Heart right ventricle (tissue), 16 donors: ENCODE measurements at regions of chr6 and their contacts with region 1.

Region 1: GRCh38 chr6:163413345-163414116 is 987 bp upstream of the QKI start:
- DNase-seq: peak; percentile 90 to 91
- ATAC-seq: peak; percentile 87 to 96 (median 90)
- H3K4me3 ChIP-seq: peak overlapping the region; percentile 48 to 85 (median 74)
- H3K27ac ChIP-seq: peak overlapping the region; percentile 95 to 100 (median 100)
- H3K4me1 ChIP-seq: peaks cover 0 to 28% (median 13%) of the 10 kb centered on the region in 9 donors
- H3K27me3 ChIP-seq: no peaks in the 10 kb centered on the region
- CTCF ChIP-seq: peak in 2 of 9 donors; percentile 6 to 8

Region 2: DNA sequence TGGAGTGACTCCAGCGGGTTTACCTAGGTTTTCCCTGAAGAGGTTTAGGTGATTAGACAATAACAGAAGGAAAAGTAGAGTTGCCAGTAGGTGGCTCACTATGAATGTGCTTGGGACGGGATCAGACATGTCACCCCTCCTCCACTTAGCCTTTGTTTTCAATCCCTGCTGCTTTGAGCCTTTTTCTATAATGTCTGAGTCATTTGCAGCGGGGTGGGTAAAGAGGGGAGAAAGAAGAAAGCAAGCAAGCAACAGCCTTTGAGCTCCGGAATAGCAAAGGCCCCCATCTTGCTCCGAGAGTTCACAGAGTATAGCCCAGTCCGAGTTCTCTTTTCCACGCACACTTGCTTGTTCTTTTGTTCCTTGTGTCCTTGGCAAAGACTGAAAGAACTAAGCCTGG is 556.6 kb before region 1 on chr6:
- intact Hi-C with region 1: loop called in 4 of 10 experiments (anchors 10 kb)
- DNase-seq: peak in 1 of 2 donors; percentile 55
- ATAC-seq: peak; percentile 76 to 92 (median 89)
- H3K4me3 ChIP-seq: peak overlapping the region in 8 of 10 donors; percentile 1 to 43 (median 36)
- H3K27ac ChIP-seq: peak overlapping the region in 9 of 10 donors; percentile 6 to 74 (median 54)
- H3K4me1 ChIP-seq: peaks cover 0 to 10% (median 0%) of the 10 kb centered on the region in 9 donors
- H3K27me3 ChIP-seq: no peaks in the 10 kb centered on the region
- CTCF ChIP-seq: peak in 8 of 9 donors; percentile 17 to 75 (median 58)

Region 3: DNA sequence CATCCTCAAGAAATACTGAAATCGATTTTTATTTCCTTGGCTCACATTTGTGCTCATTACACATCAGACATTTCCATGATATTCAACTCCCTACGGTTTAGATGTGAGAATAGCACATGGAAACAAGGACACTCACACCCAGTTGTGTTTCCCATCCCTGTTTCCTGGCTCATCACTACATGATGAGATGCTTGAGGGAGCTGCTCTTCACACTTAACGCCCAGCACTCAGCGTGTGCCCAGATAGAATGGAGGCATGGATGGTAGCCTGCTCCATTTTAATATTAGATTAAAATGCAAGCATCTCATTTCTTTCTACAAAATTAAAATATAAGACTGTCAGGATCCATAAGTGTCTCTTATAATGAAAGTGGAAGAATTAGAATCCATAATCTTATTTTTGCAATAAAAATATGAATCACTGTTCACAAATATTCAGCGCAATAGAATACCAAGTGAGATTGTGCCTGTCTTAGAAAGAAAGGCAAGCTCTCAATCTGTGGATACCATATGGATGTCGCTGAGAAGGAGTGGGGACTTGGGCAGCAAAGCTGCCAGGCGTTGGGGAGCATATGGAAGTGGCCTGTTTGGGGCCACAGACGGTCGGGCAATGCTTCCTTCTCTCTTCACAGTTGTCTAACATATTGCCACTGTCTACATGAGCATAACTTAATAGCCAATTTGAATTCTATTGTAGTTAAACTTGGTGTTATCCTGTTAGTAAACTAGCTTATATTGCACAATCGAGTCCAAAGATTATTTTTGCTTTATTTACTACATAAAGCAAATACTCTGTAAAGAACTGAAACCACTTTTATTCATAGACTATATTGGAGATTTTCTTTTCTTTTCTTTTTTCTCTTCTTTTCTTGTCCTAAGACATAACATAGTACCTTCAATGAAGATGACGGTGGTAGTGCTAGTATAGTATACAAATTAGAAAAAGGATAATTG is 205.8 kb before region 1 on chr6:
- intact Hi-C with region 1: loop called in 1 of 10 experiments (anchors 2 kb)
- DNase-seq: no peak
- ATAC-seq: no peak
- H3K4me3 ChIP-seq: no peak overlapping the region
- H3K27ac ChIP-seq: peak overlapping the region in 5 of 10 donors; percentile 7 to 87 (median 47)
- H3K4me1 ChIP-seq: peaks cover 0 to 5% (median 0%) of the 10 kb centered on the region in 9 donors
- H3K27me3 ChIP-seq: no peaks in the 10 kb centered on the region
- CTCF ChIP-seq: no peak

Region 4: DNA sequence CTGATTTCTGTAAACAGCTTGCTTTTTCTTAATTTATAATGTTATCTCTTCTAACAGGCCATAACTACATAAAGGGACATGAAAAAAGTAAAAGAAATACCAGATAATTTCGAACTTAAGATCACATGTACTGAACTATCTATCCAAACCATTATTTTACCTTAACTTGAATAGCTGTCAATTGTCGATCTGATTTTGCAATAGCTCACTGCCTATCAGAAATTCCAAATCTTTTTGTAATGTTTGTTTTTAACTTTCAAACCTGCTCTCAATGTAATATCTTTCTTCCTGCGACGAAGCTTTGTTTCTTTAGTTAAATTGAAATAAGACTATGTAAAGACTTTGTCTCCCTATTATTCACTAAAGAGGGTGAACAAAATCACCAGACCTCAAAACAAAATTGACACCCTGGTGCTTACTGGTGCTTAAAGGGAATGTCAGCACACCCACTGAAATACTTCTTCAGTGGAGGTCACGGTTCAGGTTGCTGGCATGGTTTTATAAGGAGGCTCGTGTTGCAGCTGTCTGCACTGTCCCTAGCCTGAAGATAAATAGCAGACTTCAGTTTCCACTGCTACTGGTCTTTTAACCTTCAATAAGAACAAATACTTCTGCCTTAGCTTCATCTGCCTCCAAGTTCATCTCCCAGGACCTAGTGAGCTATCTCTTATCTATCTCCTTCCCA is 116.6 kb before region 1 on chr6:
- intact Hi-C with region 1: loop called in 1 of 10 experiments (anchors 10 kb)
- DNase-seq: no peak
- ATAC-seq: peak; percentile 57 to 88 (median 76)
- H3K4me3 ChIP-seq: no peak overlapping the region
- H3K27ac ChIP-seq: peak overlapping the region in 8 of 10 donors; percentile 13 to 71 (median 40)
- H3K4me1 ChIP-seq: peaks cover 0 to 34% (median 8%) of the 10 kb centered on the region in 9 donors
- H3K27me3 ChIP-seq: no peaks in the 10 kb centered on the region
- CTCF ChIP-seq: no peak

Region 5: GRCh38 chr6:163355426-163355991 is 58.0 kb before region 1 on chr6:
- intact Hi-C with region 1: loop called in 3 of 10 experiments (anchors 5 to 10 kb)
- DNase-seq: peak; percentile 72 to 85
- ATAC-seq: peak; percentile 78 to 95 (median 89)
- H3K4me3 ChIP-seq: peak overlapping the region in 7 of 10 donors; percentile 2 to 42 (median 20)
- H3K27ac ChIP-seq: peak overlapping the region in 9 of 10 donors; percentile 55 to 91 (median 78)
- H3K4me1 ChIP-seq: peaks cover 4 to 48% (median 29%) of the 10 kb centered on the region in 9 donors
- H3K27me3 ChIP-seq: no peaks in the 10 kb centered on the region
- CTCF ChIP-seq: no peak

Region 6: GRCh38 chr6:163460307-163460782 is 46.8 kb after region 1 on chr6:
- intact Hi-C with region 1: no loop called
- DNase-seq: no peak
- ATAC-seq: peak in 6 of 8 donors; percentile 13 to 61 (median 26)
- H3K4me3 ChIP-seq: peak overlapping the region in 9 of 10 donors; percentile 15 to 51 (median 43)
- H3K27ac ChIP-seq: peak overlapping the region in 9 of 10 donors; percentile 12 to 83 (median 54)
- H3K4me1 ChIP-seq: peaks cover 7 to 100% (median 94%) of the 10 kb centered on the region in 9 donors
- H3K27me3 ChIP-seq: no peaks in the 10 kb centered on the region
- CTCF ChIP-seq: no peak

Region 7: DNA sequence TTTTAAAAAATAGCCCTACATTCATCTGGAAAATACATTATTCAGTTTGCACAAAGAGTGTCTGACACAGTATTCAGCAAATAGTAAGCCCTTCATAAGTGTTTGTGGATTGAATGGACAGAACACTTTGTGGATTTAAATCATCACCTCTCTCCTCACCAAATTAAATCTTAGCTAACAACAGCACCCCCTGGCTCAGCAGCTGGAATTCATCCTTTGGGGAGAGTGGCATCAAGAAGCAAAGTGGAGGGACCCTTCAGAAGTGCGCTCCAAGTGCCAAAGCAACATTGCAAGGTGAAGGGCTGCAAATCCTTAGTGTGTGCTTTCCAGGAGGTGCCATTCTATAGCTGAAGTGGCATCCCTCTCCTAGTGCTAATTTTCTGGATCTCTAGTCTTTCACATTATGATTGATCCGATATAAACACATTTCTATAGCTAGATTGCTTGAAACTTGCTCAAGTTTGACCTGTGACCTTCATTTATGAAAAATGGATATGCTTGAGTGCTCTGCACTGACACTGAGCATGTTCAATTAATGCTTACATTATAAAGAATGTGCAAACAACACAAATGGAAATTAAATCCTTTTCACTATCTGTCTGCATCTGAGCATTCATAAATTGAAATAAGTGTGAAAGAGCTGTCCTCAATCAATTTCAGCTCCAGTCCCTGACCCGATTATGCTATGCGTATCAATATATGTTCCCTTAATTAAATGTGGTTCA is 1004.2 kb after region 1 on chr6:
- intact Hi-C with region 1: loop called in 1 of 10 experiments (anchors 10 kb)
- DNase-seq: no peak
- ATAC-seq: no peak
- H3K4me3 ChIP-seq: no peak overlapping the region
- H3K27ac ChIP-seq: no peak overlapping the region
- H3K4me1 ChIP-seq: peaks cover 0 to 29% (median 9%) of the 10 kb centered on the region in 9 donors
- H3K27me3 ChIP-seq: no peaks in the 10 kb centered on the region
- CTCF ChIP-seq: peak in 3 of 9 donors; percentile 6 to 33 (median 18)